Activated B cell treated with CpG ODN at 0.5 μM for 24 hours (primary cell): ENCODE measurements at regions of chr19 and their contacts with region 1.

Region 1: DNA sequence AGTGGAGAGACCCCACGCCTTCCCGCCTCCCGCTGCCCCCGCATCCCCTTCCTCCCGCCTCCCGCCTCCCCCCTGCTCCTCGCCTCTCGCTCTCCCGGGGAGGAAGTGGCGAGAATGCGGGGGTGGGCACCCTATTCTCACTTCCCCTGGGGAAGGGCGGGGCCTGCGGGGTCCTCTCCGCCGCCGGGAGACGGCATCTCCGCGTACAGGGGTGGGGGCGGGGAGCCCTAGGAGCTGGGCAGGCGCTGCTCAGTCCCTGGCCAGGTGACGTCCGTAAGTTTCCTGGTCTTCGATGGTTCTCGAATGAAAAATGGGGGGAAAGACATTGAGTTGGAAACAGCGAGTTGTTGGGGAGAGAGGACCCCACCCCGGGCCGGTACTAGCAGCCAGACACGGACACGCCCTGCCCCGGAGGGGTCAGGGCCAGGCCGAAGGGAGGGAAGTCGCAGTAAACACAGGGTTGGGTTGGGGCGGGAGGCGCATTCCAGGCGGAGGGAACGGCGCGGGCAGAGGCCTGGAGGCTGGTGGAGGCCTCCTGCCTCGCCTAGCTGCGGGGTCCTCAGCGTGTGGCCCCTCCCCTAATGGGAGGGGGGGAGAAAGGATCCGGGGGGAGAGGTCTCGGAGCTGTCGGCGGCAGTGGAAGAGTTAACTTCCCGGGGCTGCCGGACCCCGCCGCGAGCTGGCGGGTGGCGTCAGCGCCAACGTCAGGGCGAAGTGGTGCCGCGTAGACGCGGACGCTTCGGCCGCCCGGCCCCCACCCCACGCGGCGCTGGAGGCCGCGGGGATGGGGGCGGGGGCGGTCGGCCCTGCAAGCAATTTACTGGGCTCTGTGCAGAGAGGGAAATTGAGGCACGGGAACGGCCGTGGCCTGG is 10.4 kb upstream of the JUND start:
- DNase-seq: peak; percentile 88
- ATAC-seq: peak; percentile 59
- H3K4me3 Mint-ChIP-seq: peak overlapping the region; percentile 95
- H3K27ac Mint-ChIP-seq: peak overlapping the region; percentile 96
- H3K4me1 Mint-ChIP-seq: peaks cover 60% of the 10 kb centered on the region
- H3K27me3 Mint-ChIP-seq: no peaks in the 10 kb centered on the region
- CTCF ChIP-seq: no peak

Region 2: DNA sequence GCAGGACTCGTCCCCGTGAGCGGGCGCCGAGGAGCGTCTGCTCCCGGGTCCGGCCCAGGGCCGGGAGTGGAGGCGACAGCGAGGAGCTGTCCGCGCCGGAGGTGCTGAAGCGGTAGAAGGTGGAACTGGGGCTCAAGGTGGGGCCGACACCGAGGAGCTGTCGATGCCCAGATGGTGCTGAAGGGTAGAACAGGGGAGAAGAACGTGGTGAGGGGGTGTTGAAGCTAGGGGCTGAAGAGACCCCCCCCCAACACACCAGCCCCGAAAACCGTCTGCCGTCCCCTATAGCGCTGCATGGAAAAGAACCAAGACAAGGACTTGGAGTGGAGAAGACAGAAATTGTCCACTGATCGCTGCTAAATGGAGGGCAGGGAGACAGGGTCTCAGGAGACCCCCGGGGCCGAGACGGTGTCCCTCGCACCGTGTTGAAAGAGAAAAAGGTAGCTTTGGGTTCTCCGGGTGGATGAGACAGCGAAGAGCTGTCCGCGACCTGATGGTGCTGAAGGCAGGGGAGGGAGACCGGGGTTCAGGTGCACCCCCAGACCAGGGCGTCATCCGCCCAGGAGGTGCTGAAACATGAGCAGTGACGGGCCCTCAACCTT is 58.5 kb before region 1 on chr19:
- CTCF ChIA-PET with region 1: no interaction called
- POLR2A ChIA-PET with region 1: interaction called, 11 read pairs
- intact Hi-C with region 1: no loop called
- DNase-seq: peak; percentile 53
- ATAC-seq: peak; percentile 85
- H3K4me3 Mint-ChIP-seq: no peak overlapping the region
- H3K27ac Mint-ChIP-seq: peak overlapping the region; percentile 50
- H3K4me1 Mint-ChIP-seq: peaks cover 17% of the 10 kb centered on the region
- H3K27me3 Mint-ChIP-seq: peaks cover 52% of the 10 kb centered on the region
- CTCF ChIP-seq: no peak

Region 3: GRCh38 chr19:18304458-18305310 is 12.9 kb after region 1 on chr19:
- CTCF ChIA-PET with region 1: interaction called, 16 read pairs
- POLR2A ChIA-PET with region 1: interaction called, 857 read pairs
- intact Hi-C with region 1: loop called (anchors 1 kb)
- DNase-seq: peak; percentile 74
- ATAC-seq: peak; percentile 73
- H3K4me3 Mint-ChIP-seq: peak overlapping the region; percentile 85
- H3K27ac Mint-ChIP-seq: peak overlapping the region; percentile 95
- H3K4me1 Mint-ChIP-seq: peaks cover 54% of the 10 kb centered on the region
- H3K27me3 Mint-ChIP-seq: no peaks in the 10 kb centered on the region
- CTCF ChIP-seq: no peak

Region 4: GRCh38 chr19:18322759-18323460 is 31.1 kb after region 1 on chr19 and contains the start of gene LSM4:
- CTCF ChIA-PET with region 1: interaction called, 5 read pairs
- POLR2A ChIA-PET with region 1: interaction called, 857 read pairs
- intact Hi-C with region 1: loop called (anchors 1 kb)
- DNase-seq: peak; percentile 98
- ATAC-seq: peak; percentile 94
- H3K4me3 Mint-ChIP-seq: peak within 1 kb of the TSS; percentile 85
- H3K27ac Mint-ChIP-seq: peak within 1 kb of the TSS; percentile 91
- H3K4me1 Mint-ChIP-seq: peaks cover 46% of the 10 kb centered on the region
- H3K27me3 Mint-ChIP-seq: no peaks in the 10 kb centered on the region
- CTCF ChIP-seq: no peak
- total RNA-seq, gene LSM4: 59.2 and 70.3 TPM in 2 replicates

Region 5: DNA sequence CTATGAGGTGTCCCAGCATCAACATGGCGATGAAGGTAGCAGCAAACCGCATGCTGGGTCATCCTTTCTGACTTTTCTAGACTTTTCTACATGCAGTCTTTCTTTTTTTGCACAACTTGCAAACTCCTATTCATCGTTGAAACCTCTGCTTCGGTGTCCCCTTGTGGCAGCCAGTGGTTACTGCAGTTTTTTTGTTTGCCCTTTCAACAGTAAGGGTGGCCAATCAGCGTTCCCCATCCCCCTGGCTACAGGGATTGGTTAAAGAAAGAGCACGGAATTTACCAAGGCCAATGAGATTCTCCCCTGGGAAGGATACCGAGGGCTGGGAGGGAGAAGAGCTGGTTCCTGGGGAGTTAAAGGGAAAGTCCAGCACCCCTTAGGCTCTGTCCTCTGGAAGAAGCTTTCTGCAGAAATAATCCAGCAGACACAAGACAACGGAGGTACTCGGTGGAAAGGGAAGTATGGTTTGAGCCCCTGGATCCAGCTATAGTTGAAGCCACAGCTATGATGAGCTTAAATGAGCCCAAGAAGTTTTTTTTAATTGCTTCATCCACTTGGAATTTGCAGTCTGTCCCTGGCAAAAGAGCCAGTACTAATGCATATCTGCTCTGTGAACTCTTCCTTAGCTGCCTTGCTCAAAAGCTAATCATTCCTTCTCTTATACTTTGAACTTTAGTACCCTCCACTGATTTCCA is 36.7 kb after region 1 on chr19:
- CTCF ChIA-PET with region 1: interaction called, 5 read pairs
- POLR2A ChIA-PET with region 1: interaction called, 857 read pairs
- intact Hi-C with region 1: loop called (anchors 1 kb)
- DNase-seq: peak; percentile 56
- ATAC-seq: peak; percentile 98
- H3K4me3 Mint-ChIP-seq: peak overlapping the region; percentile 56
- H3K27ac Mint-ChIP-seq: peak overlapping the region; percentile 20
- H3K4me1 Mint-ChIP-seq: peaks cover 14% of the 10 kb centered on the region
- H3K27me3 Mint-ChIP-seq: peaks cover 8% of the 10 kb centered on the region
- CTCF ChIP-seq: peak; percentile 53

Region 6: GRCh38 chr19:18340190-18340989 is 48.6 kb after region 1 on chr19 and contains the start of gene PGPEP1:
- CTCF ChIA-PET with region 1: no interaction called
- POLR2A ChIA-PET with region 1: interaction called, 13 read pairs
- intact Hi-C with region 1: no loop called
- DNase-seq: peak; percentile 70
- ATAC-seq: peak; percentile 72
- H3K4me3 Mint-ChIP-seq: peak within 1 kb of the TSS; percentile 80
- H3K27ac Mint-ChIP-seq: peak within 1 kb of the TSS; percentile 3
- H3K4me1 Mint-ChIP-seq: peaks cover 13% of the 10 kb centered on the region
- H3K27me3 Mint-ChIP-seq: peaks cover 6% of the 10 kb centered on the region
- CTCF ChIP-seq: no peak
- total RNA-seq, gene PGPEP1: 5.6 and 6.9 TPM in 2 replicates

Region 7: GRCh38 chr19:18373892-18374629 is 82.2 kb after region 1 on chr19:
- CTCF ChIA-PET with region 1: no interaction called
- POLR2A ChIA-PET with region 1: no interaction called
- intact Hi-C with region 1: no loop called
- DNase-seq: peak; percentile 50
- ATAC-seq: peak; percentile 86
- H3K4me3 Mint-ChIP-seq: peak overlapping the region; percentile 7
- H3K27ac Mint-ChIP-seq: peak overlapping the region; percentile 41
- H3K4me1 Mint-ChIP-seq: peaks cover 25% of the 10 kb centered on the region
- H3K27me3 Mint-ChIP-seq: no peaks in the 10 kb centered on the region
- CTCF ChIP-seq: no peak